ENCODE measurements at regions of chr1 and their contacts with region 1.

Region 1: GRCh38 chr1:37859507-37860345 is at the start of gene MTF1:
- DNase-seq: peak; percentile 97 to 99
- ATAC-seq: peak; percentile 98 to 99 (median 98)
- H3K4me3 ChIP-seq: peak within 1 kb of the TSS; percentile 99
- H3K27ac ChIP-seq: peak within 1 kb of the TSS; percentile 95
- H3K4me1 ChIP-seq: peaks cover 33% of the 10 kb centered on the region
- H3K27me3 ChIP-seq: no peaks in the 10 kb centered on the region
- CTCF ChIP-seq: peak; percentile 91
- total RNA-seq, gene MTF1: 13.3 to 18.8 (median 14.0) TPM

Region 2: GRCh38 chr1:37692078-37692833 is 167.5 kb before region 1 on chr1 and contains the start of gene CDCA8:
- intact Hi-C with region 1: loop called in 1 of 2 experiments (anchors 10 kb)
- DNase-seq: peak; percentile 98 to 99
- ATAC-seq: peak; percentile 93 to 95 (median 93)
- H3K4me3 ChIP-seq: peak within 1 kb of the TSS; percentile 85
- H3K27ac ChIP-seq: peak within 1 kb of the TSS; percentile 84
- H3K4me1 ChIP-seq: peaks cover 22% of the 10 kb centered on the region
- H3K27me3 ChIP-seq: no peaks in the 10 kb centered on the region
- CTCF ChIP-seq: peak; percentile 50
- total RNA-seq, gene CDCA8: 0.10 to 0.67 (median 0.14) TPM

Region 3: DNA sequence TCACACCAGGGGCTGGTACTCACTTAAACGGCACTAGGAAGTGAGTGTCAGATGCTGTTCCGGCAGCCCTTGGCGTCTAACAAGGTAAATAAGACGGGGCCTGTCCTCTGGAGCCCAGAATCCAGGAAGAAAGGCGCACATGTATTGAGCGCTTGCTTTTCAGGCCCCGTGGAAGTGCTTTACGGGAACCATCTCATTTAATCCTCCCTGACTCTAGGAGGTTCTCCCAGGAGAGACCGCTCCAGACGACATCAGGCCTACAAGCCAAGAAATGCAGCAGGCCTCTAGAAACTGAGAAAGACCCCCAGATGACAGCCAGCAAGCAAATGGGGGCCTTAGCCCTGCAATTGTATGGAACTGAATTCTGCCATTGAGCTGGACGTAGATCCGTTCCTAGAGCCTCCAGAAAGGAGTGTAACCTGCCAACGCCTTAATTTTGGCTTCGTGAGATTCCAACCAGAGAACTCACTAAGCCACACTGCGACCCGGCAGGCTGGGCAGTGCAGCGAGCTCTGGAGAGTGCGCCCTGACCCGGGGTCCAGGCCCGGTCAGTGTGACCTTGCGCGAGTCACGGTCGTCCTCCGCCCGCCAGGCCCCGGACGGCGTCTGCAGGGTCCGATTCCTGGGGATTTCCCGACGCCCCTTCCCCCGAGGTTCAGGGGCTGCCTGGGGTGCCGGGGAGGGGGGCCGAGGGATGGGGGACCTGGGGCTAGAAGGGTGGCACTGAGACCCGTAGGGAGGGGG is 66.6 kb before region 1 on chr1:
- intact Hi-C with region 1: no loop called
- DNase-seq: no peak
- ATAC-seq: peak in 2 of 4 donors; percentile 9 to 25
- H3K4me3 ChIP-seq: peak overlapping the region; percentile 65
- H3K27ac ChIP-seq: no peak overlapping the region
- H3K4me1 ChIP-seq: peaks cover 16% of the 10 kb centered on the region
- H3K27me3 ChIP-seq: peaks cover 0 to 2% (median 0%) of the 10 kb centered on the region in 3 donors
- CTCF ChIP-seq: no peak

Region 4: DNA sequence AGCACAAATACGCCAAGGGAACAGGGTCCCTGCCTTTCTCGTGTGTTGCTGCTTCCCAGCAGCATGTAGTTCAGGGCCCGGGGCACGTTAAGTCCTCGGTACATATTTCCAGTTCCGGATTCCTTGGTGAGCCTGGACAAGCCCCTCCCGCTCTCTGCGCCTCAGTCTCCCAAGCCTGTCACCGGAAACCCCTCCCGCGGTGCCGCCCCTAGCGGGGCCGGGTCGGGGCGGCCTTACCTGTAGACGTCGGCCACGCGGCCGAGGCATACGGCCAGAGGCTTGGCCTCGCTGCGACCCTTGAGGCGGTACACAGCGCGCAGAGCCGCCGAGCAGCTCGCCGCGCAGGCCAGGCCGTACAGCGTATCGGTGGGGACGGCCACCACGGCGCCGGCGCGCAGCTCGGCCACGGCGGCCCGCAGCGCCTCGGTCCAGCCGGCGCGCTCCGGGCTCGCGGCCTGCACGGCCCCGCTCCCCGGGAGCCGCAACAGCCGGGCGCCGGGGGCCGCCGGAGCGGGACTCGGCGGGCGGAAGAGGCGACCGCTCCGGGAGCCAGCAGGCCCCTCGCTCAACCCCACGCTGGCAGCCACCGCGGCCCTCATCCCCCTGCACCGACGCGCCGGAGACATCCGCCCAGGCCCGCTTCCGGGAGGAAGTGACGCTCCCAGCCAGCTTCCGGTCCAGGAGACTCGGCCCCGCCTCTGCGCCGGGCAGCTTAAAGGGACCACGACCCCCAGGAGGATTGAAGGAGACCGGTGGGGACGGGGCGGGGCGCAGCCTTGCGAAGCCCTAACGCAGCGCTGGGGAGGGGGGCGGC is 52.0 kb before region 1 on chr1 and contains the starts of genes C1orf122 and YRDC:
- intact Hi-C with region 1: loop called (anchors 2 kb)
- DNase-seq: peak; percentile 95 to 97
- ATAC-seq: peak; percentile 95 to 96 (median 95)
- H3K4me3 ChIP-seq: peak within 1 kb of the TSS; percentile 88
- H3K27ac ChIP-seq: peak within 1 kb of the TSS; percentile 93
- H3K4me1 ChIP-seq: peaks cover 19% of the 10 kb centered on the region
- H3K27me3 ChIP-seq: no peaks in the 10 kb centered on the region
- CTCF ChIP-seq: no peak
- total RNA-seq, gene C1orf122: 26.6 to 32.1 (median 28.1) TPM
- total RNA-seq, gene YRDC: 3.4 to 12.5 (median 10.2) TPM

Region 5: GRCh38 chr1:37813529-37814145 is 46.1 kb before region 1 on chr1:
- intact Hi-C with region 1: loop called (anchors 2 kb)
- DNase-seq: no peak
- ATAC-seq: no peak
- H3K4me3 ChIP-seq: no peak overlapping the region
- H3K27ac ChIP-seq: peak overlapping the region; percentile 14
- H3K4me1 ChIP-seq: peaks cover 10% of the 10 kb centered on the region
- H3K27me3 ChIP-seq: no peaks in the 10 kb centered on the region
- CTCF ChIP-seq: no peak

Measured in psoas muscle (tissue), 8 donors.